ENCODE measurements at regions of chr4 and their contacts with region 1.

Region 1: GRCh38 chr4:13316354-13316753 is 167.8 kb downstream of the RAB28 start:
- DNase-seq: no peak
- H3K4me3 ChIP-seq: no peak overlapping the region
- H3K4me3 Mint-ChIP-seq: no peak overlapping the region
- H3K27ac Mint-ChIP-seq: no peak overlapping the region
- H3K4me1 ChIP-seq: no peaks in the 10 kb centered on the region
- H3K4me1 Mint-ChIP-seq: no peaks in the 10 kb centered on the region
- H3K27me3 ChIP-seq: no peaks in the 10 kb centered on the region
- H3K27me3 Mint-ChIP-seq: no peaks in the 10 kb centered on the region
- CTCF ChIP-seq: no peak

Region 2: DNA sequence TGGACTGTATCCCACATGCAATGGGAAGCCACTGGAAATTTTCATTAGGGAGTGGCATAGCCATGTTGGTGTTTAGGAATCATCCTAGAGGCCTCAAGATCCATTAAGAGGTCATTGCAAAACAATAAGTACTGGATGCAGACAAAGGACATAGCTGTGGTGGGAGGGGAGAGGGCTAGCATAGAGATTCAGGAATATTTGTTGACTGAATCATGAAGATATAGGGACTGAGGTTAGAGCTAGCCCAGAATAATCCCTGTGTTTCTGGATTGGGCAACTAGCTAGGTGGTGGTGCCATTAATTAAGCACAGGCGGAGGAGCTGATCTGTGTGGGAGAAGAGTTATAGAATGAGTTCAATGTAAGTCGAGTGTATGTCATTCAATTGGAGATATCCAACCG is 32.7 kb after region 1 on chr4:
- CTCF ChIA-PET with region 1: no interaction called
- POLR2A ChIA-PET with region 1: no interaction called
- intact Hi-C with region 1: loop called (anchors 1 kb)
- DNase-seq: no peak
- H3K4me3 ChIP-seq: no peak overlapping the region
- H3K4me3 Mint-ChIP-seq: no peak overlapping the region
- H3K27ac Mint-ChIP-seq: no peak overlapping the region
- H3K4me1 ChIP-seq: no peaks in the 10 kb centered on the region
- H3K4me1 Mint-ChIP-seq: no peaks in the 10 kb centered on the region
- H3K27me3 ChIP-seq: no peaks in the 10 kb centered on the region
- H3K27me3 Mint-ChIP-seq: no peaks in the 10 kb centered on the region
- CTCF ChIP-seq: no peak

Measured in Caco-2 (cell line).